ENCODE measurements at regions of chr1 and their contacts with region 1.

Region 1: GRCh38 chr1:115332813-115333608 is 5.0 kb downstream of the NGF start:
- DNase-seq: no peak
- H3K4me3 ChIP-seq: no peak overlapping the region
- H3K27ac ChIP-seq: no peak overlapping the region
- H3K4me1 ChIP-seq: no peaks in the 10 kb centered on the region
- CTCF ChIP-seq: no peak

Region 2: GRCh38 chr1:115665319-115666096 is 332.5 kb after region 1 on chr1:
- CTCF ChIA-PET with region 1: no interaction called
- POLR2A ChIA-PET with region 1: interaction called, 12 read pairs
- intact Hi-C with region 1: no loop called
- DNase-seq: no peak
- H3K4me3 ChIP-seq: no peak overlapping the region
- H3K27ac ChIP-seq: no peak overlapping the region
- H3K4me1 ChIP-seq: no peaks in the 10 kb centered on the region
- CTCF ChIP-seq: no peak